Natural killer cell (primary cell): ENCODE measurements at regions of chr3 and their contacts with region 1.

Region 1: GRCh38 chr3:66253790-66254620 is 33.2 kb downstream of the SLC25A26 start:
- DNase-seq: peak in 1 of 2 donors; percentile 69
- ATAC-seq: peak in 2 of 3 donors; percentile 46 to 70
- H3K4me3 ChIP-seq: no peak overlapping the region
- H3K4me3 Mint-ChIP-seq: no peak overlapping the region
- H3K27ac ChIP-seq: no peak overlapping the region
- H3K27ac Mint-ChIP-seq: no peak overlapping the region
- H3K4me1 ChIP-seq: no peaks in the 10 kb centered on the region
- H3K4me1 Mint-ChIP-seq: peaks cover 0 to 7% of the 10 kb centered on the region in 2 donors
- H3K27me3 ChIP-seq: no peaks in the 10 kb centered on the region
- H3K27me3 Mint-ChIP-seq: no peaks in the 10 kb centered on the region
- CTCF ChIP-seq: peak; percentile 94

Region 2: GRCh38 chr3:66195347-66195783 is 58.6 kb before region 1 on chr3:
- intact Hi-C with region 1: no loop called
- DNase-seq: no peak
- ATAC-seq: no peak
- H3K4me3 ChIP-seq: no peak overlapping the region
- H3K4me3 Mint-ChIP-seq: no peak overlapping the region
- H3K27ac ChIP-seq: no peak overlapping the region
- H3K27ac Mint-ChIP-seq: no peak overlapping the region
- H3K4me1 ChIP-seq: no peaks in the 10 kb centered on the region
- H3K4me1 Mint-ChIP-seq: peaks cover 6 to 19% of the 10 kb centered on the region in 2 donors
- H3K27me3 ChIP-seq: no peaks in the 10 kb centered on the region
- H3K27me3 Mint-ChIP-seq: peaks cover 0 to 21% of the 10 kb centered on the region in 2 donors
- CTCF ChIP-seq: no peak

Region 3: DNA sequence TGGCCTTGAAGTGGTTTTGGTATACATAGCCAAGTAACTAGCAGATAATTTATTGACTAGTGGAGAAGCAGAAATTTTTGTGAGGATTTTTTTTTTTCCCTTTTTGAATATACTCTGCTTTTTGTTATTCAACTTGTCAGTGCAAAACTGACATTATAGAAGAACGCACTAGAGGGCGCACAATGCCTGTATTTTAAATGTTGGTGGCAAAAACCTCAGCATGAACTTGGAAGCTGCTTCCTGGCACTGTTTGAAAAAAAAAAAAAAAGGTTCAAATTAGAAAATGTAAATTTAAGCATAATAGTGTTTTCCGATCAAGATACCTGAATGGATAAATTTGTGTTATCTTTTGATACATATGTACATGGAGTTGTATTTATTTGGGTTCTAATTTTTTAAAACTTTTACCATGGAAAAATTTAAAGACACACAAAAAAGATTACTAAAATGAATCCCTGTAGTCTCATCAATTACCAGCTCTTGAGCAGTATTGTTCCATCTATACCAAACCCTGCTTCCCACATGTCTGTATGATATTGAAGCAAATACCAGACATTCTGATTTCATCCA is 22.8 kb after region 1 on chr3:
- intact Hi-C with region 1: loop called (anchors 1 kb)
- DNase-seq: peak; percentile 27 to 86
- ATAC-seq: peak in 2 of 3 donors; percentile 60 to 86
- H3K4me3 ChIP-seq: no peak overlapping the region
- H3K4me3 Mint-ChIP-seq: no peak overlapping the region
- H3K27ac ChIP-seq: no peak overlapping the region
- H3K27ac Mint-ChIP-seq: peak overlapping the region; percentile 17 to 72
- H3K4me1 ChIP-seq: peaks cover 4% of the 10 kb centered on the region
- H3K4me1 Mint-ChIP-seq: peaks cover 33 to 38% of the 10 kb centered on the region in 2 donors
- H3K27me3 ChIP-seq: no peaks in the 10 kb centered on the region
- H3K27me3 Mint-ChIP-seq: no peaks in the 10 kb centered on the region
- CTCF ChIP-seq: peak; percentile 79

Region 4: DNA sequence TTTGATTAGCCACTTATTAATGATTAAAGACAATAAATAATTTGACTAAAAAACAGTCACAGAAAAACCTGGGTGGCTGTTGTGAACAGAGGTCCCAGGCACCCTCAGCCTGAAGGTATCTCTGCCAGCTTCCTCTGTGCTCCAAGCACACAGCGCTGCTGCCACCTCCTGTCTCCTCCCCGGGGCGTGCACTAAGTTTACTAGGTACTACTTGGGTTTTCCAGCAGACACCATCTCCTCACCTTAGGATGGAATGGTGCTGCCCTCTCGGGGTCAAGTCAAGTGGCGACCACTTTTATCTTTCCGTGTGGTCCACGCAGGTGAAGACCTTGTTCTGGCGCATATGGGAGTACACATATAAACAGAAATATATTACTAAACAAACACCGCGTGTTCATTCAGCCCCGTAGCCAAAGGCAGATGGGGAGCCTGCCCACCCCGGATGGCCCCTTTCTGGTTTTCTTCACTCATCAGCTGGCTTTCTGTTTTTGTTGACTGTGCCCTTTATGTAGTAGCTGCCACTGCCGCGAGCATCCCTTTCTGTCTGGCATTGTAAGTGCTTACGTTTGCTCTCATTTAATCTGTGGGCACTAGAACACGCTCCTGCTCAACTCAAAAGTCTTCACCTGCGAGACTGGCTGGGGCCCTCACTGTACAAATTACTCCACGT is 118.8 kb after region 1 on chr3:
- intact Hi-C with region 1: loop called (anchors 1 kb)
- DNase-seq: peak; percentile 46 to 72
- ATAC-seq: peak; percentile 76 to 99 (median 96)
- H3K4me3 ChIP-seq: no peak overlapping the region
- H3K4me3 Mint-ChIP-seq: no peak overlapping the region
- H3K27ac ChIP-seq: no peak overlapping the region
- H3K27ac Mint-ChIP-seq: peak overlapping the region in 1 of 2 donors; percentile 19
- H3K4me1 ChIP-seq: peaks cover 24% of the 10 kb centered on the region
- H3K4me1 Mint-ChIP-seq: peaks cover 17 to 24% of the 10 kb centered on the region in 2 donors
- H3K27me3 ChIP-seq: no peaks in the 10 kb centered on the region
- H3K27me3 Mint-ChIP-seq: no peaks in the 10 kb centered on the region
- CTCF ChIP-seq: peak; percentile 62

Region 5: GRCh38 chr3:66816090-66816761 is 562.2 kb after region 1 on chr3:
- intact Hi-C with region 1: loop called (anchors 1 kb)
- DNase-seq: peak in 1 of 2 donors; percentile 68
- ATAC-seq: peak; percentile 72 to 77 (median 77)
- H3K4me3 ChIP-seq: no peak overlapping the region
- H3K4me3 Mint-ChIP-seq: no peak overlapping the region
- H3K27ac ChIP-seq: no peak overlapping the region
- H3K27ac Mint-ChIP-seq: no peak overlapping the region
- H3K4me1 ChIP-seq: no peaks in the 10 kb centered on the region
- H3K4me1 Mint-ChIP-seq: no peaks in the 10 kb centered on the region
- H3K27me3 ChIP-seq: peaks cover 3% of the 10 kb centered on the region
- H3K27me3 Mint-ChIP-seq: peaks cover 2 to 24% of the 10 kb centered on the region in 2 donors
- CTCF ChIP-seq: peak; percentile 69